ENCODE measurements at regions of chr14 and their contacts with region 1.

Region 1: DNA sequence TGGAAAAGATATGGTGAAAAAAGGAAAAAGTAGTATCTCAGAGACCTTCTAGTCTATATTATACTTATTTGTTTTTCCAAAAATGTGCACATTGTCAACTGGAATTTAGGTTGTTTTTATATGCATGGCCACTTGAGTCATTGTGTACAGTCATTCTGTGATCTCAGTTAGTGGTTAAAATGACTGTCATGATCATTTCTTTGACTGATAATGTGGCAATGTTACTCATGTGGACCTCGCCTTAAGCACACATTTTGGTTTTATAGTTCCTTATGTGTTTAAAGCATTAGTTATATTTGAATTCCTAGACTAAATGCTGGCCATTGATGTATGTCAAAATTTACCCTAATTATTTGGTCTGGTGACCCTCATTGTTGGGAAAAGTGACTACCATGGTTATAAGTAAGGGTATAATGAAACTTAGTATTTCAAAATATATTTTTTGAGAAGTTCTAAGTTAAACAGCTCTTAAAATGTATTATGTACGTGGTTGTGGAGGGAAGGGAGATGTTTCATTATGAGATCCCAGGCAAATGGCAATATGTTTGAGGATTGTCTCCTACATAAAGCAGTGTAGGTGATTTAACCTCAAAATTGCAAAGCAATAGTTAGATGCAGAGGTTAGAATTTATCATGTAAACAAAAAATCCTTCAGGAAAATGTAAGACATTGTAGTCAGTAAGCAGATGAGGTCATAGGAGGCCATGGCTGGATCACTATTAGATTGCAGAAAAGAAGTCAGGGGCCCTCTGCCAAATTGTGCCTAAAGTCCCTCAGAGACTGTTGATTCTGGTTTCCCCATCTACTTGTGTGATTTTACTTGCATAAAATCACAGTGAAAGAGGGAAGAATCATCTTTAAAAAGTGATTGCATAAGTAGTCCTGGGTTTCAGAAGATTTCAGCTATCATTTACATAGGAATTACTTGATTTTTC is 17.5 kb downstream of the PNMA1 start:
- DNase-seq: peak; percentile 88
- ATAC-seq: peak; percentile 92
- H3K4me3 ChIP-seq: peak overlapping the region; percentile 59; the same call in 1 of the 2 replicates
- H3K27ac ChIP-seq: peak overlapping the region; percentile 97
- H3K4me1 ChIP-seq: peaks cover 21% of the 10 kb centered on the region
- H3K27me3 ChIP-seq: no peaks in the 10 kb centered on the region
- CTCF ChIP-seq: no peak
- EP300 ChIP-seq: peak; percentile 72 to 97
- POLR2A ChIP-seq: no peak
- RAD21 ChIP-seq: no peak

Region 2: DNA sequence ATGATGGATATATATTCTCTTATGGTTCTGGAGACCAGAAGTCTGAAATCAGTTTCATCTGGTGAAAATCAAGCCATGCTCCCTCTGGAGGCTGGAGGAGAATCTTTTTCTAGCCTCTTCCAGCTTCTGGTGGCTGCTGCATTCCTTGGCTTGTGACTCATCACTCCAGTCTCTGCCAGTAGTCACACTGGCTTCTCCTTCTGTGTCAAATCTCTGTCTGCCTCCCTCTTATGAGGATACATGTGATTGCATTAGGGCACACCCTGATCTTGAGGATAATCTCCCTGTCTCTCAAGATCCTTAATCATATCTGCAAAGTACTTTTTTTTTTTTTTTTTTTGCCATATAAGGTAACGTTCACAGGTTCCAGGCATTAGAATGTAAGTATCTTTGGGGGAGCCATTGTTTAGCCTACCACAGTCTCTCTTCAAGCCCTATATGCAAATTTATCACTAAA is 34.2 kb before region 1 on chr14:
- CTCF ChIA-PET with region 1: no interaction called
- POLR2A ChIA-PET with region 1: no interaction called
- RAD21 ChIA-PET with region 1: interaction called, 3 read pairs
- SMC1A ChIA-PET with region 1: interaction called, 4 read pairs
- in situ Hi-C with region 1: no loop called
- intact Hi-C with region 1: loop called (anchors 5 kb)
- DNase-seq: no peak
- ATAC-seq: no peak
- H3K4me3 ChIP-seq: no peak overlapping the region
- H3K27ac ChIP-seq: 0 out of 2 replicates have a peak overlapping the region, but pooled peaks have one; percentile 44
- H3K4me1 ChIP-seq: no peaks in the 10 kb centered on the region; the same call in 1 of the 2 replicates
- H3K27me3 ChIP-seq: no peaks in the 10 kb centered on the region
- CTCF ChIP-seq: 0 out of 6 replicates have a peak, but pooled peaks of 2 of the 3 experiments have one; percentile 2 to 4
- EP300 ChIP-seq: no peak
- POLR2A ChIP-seq: no peak
- RAD21 ChIP-seq: no peak